ENCODE measurements at regions of chr21 and their contacts with region 1.

Region 1: GRCh38 chr21:34888569-34889319 is 160.4 kb downstream of the RUNX1 start:
- DNase-seq: peak; percentile 86
- ATAC-seq: peak; percentile 62
- H3K4me3 Mint-ChIP-seq: peak overlapping the region; percentile 93
- H3K27ac Mint-ChIP-seq: peak overlapping the region; percentile 94
- H3K4me1 Mint-ChIP-seq: peaks cover 22% of the 10 kb centered on the region
- H3K27me3 Mint-ChIP-seq: peaks cover 21% of the 10 kb centered on the region

Region 2: GRCh38 chr21:34915364-34915841 is 26.7 kb after region 1 on chr21:
- POLR2A ChIA-PET with region 1: no interaction called
- DNase-seq: no peak
- ATAC-seq: no peak
- H3K4me3 Mint-ChIP-seq: no peak overlapping the region
- H3K27ac Mint-ChIP-seq: no peak overlapping the region
- H3K4me1 Mint-ChIP-seq: no peaks in the 10 kb centered on the region
- H3K27me3 Mint-ChIP-seq: peaks cover 4% of the 10 kb centered on the region

Region 3: GRCh38 chr21:34967509-34968289 is 79.0 kb after region 1 on chr21:
- POLR2A ChIA-PET with region 1: no interaction called
- DNase-seq: no peak
- ATAC-seq: peak; percentile 34
- H3K4me3 Mint-ChIP-seq: no peak overlapping the region
- H3K27ac Mint-ChIP-seq: no peak overlapping the region
- H3K4me1 Mint-ChIP-seq: peaks cover 40% of the 10 kb centered on the region
- H3K27me3 Mint-ChIP-seq: peaks cover 33% of the 10 kb centered on the region

Region 4: GRCh38 chr21:34983680-34984086 is 94.9 kb after region 1 on chr21:
- POLR2A ChIA-PET with region 1: interaction called, 10 read pairs
- DNase-seq: no peak
- ATAC-seq: peak; percentile 59
- H3K4me3 Mint-ChIP-seq: peak overlapping the region; percentile 73
- H3K27ac Mint-ChIP-seq: peak overlapping the region; percentile 77
- H3K4me1 Mint-ChIP-seq: peaks cover 55% of the 10 kb centered on the region
- H3K27me3 Mint-ChIP-seq: peaks cover 28% of the 10 kb centered on the region

Region 5: GRCh38 chr21:35026617-35027562 is 138.1 kb after region 1 on chr21:
- POLR2A ChIA-PET with region 1: interaction called, 10 read pairs
- DNase-seq: peak; percentile 87
- ATAC-seq: peak; percentile 95
- H3K4me3 Mint-ChIP-seq: peak overlapping the region; percentile 89
- H3K27ac Mint-ChIP-seq: peak overlapping the region; percentile 99
- H3K4me1 Mint-ChIP-seq: peaks cover 59% of the 10 kb centered on the region
- H3K27me3 Mint-ChIP-seq: no peaks in the 10 kb centered on the region

Measured in activated naive CD8-positive, alpha-beta T cell treated with anti-CD3 and anti-CD28 coated beads, Interleukin-2, amount 10 ng/mL, durations not matched to agents 7 days and 5 days (primary cell).